WTC11 (cell line): ENCODE measurements at regions of chr11 and their contacts with region 1.

Region 1: DNA sequence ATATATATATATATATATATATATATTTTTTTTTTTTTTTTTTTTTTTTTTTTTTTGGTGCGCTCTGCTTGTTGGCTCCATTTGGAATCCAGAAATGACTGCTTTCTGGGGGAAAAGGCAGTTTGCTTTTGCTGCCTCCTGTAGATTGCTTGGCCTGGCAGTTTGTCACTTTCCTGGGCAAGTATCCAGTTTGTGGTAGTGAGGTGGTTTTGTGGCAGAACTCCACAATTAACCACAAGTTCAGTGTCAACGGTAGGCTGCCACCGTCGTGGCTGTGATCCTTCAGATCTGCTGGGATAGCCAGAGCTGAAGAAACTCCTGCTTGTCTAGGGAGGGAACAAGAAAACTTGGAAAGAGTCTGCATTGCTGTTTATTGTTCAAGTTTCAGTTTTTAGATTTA is 5.0 kb upstream of the PDE3B start:
- DNase-seq: no peak
- ATAC-seq: no peak
- H3K4me3 Mint-ChIP-seq: no peak overlapping the region
- H3K27ac Mint-ChIP-seq: no peak overlapping the region
- H3K4me1 Mint-ChIP-seq: peaks cover 15% of the 10 kb centered on the region
- H3K27me3 Mint-ChIP-seq: peaks cover 28% of the 10 kb centered on the region
- CTCF ChIP-seq: no peak

Region 2: DNA sequence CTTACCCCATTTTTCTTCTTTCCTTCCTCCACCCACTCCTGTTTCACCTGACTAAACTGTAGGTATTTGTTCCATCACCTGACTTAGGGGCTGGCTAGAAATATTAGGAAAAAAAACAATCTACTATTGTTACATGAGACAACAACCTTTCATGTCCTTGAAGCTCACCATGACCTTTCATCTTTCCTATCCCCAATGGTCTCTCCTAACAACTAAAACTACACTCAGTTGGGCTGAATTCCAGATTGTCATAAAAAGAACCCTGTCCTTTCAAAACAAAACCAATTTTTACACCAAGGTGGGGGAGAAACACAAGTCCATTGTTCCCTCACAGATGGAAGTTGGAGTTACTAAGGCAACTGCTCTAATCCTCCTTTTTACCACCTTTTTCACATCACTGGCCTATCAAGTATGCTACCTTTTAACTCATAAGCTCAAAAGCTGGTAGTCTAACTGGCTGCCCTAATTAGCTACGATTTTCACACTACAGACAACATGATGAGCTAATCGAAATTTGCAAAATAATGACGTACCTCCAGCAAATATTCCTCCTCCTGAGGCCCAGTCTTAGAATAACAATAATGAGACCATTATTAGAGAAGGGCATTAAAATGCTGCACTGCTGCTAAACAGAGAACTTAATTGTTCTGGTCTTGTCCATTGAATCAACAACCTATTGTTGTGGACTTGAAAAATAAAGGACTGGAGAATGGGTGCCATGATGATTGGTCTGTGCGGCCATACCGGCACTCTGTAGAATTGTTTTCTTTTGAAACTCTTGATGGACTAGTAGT is 1764.3 kb after region 1 on chr11:
- CTCF ChIA-PET with region 1: interaction called, 11 read pairs
- POLR2A ChIA-PET with region 1: no interaction called
- DNase-seq: no peak
- ATAC-seq: peak; percentile 82
- H3K4me3 Mint-ChIP-seq: no peak overlapping the region
- H3K27ac Mint-ChIP-seq: no peak overlapping the region
- H3K4me1 Mint-ChIP-seq: peaks cover 29% of the 10 kb centered on the region
- H3K27me3 Mint-ChIP-seq: peaks cover 97% of the 10 kb centered on the region
- CTCF ChIP-seq: no peak